ENCODE measurements at regions of chr9 and their contacts with region 1.

Region 1: GRCh38 chr9:129495534-129496325 is 125.2 kb downstream of the C9orf50 start:
- DNase-seq: peak; percentile 97
- ATAC-seq: peak; percentile 89

Region 2: GRCh38 chr9:129139993-129140396 is 355.7 kb before region 1 on chr9:
- intact Hi-C with region 1: loop called (anchors 2 kb)
- DNase-seq: peak; percentile 93
- ATAC-seq: peak; percentile 84

Region 3: DNA sequence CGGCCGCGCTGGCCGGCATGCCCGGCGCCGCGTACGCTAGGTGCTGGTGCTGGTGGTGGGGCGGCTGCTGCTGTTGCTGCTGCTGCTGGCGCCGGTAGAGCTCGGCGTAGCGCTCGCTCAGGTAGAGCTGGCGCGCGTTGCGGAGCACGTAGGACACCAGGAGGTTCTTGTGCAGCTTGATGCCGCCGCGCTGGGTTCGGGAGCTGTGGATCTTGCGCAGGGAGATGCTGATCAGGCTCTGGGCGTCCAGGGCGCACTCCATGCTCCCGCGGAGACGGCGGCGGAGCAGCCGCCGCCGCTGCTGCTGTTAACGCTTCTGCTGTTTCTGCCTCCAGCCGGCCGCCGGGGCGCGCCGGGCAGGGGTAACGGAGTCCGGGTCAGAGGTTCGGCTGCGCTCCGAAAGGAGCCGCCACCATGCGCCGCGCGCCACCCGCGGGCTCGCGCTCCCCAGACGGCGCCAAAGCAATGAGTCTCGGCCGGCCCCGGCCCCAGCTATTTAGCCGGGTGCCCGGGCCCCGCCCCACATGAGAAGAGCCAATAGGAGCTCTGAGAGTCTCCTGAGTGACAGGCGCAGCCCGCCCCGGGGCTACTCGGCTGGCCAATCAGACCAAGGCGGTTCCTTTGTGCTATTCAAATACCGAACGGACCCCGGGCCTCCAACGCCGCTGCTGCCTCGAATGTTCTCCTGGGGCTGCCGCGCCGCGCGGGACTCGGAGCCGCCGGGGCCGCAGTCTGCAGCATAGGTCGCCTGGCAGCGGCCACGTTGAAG is 317.8 kb before region 1 on chr9 and contains the start of gene IER5L:
- intact Hi-C with region 1: loop called (anchors 1 kb)
- DNase-seq: peak; percentile 98
- ATAC-seq: peak; percentile 84
- total RNA-seq, gene IER5L: 4.6 TPM

Region 4: DNA sequence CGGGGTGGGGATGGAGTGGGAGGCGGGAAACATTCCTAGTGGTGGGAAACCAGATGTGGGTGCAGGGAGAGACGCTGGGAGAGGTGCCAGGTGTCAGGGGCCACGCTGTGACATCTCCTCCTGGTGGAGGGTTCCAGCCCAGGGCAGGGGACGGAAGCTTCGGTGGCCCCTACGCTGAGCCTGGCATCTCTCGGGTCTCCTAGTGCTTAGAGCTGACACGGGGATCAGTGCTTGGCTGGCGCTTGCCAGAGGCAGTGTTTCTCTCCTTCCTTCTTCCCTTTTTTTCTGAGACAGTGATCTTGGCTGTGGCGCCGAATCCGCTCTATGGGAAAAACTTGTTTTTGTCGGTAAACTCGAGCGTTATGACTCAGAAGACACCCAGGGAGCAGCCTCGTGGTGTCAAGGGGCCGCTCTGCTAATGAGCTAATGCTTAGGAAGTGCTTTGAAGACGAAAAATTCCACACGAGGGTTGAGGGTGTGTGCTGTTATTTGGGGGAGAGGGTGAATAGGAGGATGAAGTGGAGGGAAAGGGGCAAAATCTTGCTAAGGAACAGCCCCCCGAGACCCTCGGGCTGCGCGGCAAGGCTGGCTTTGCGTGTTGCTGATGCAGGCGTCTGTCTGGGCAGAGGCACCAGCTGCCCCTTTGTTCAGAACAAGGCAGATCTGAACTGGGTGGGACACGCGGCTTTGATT is 297.3 kb before region 1 on chr9:
- intact Hi-C with region 1: no loop called
- DNase-seq: peak; percentile 72
- ATAC-seq: peak; percentile 55

Region 5: DNA sequence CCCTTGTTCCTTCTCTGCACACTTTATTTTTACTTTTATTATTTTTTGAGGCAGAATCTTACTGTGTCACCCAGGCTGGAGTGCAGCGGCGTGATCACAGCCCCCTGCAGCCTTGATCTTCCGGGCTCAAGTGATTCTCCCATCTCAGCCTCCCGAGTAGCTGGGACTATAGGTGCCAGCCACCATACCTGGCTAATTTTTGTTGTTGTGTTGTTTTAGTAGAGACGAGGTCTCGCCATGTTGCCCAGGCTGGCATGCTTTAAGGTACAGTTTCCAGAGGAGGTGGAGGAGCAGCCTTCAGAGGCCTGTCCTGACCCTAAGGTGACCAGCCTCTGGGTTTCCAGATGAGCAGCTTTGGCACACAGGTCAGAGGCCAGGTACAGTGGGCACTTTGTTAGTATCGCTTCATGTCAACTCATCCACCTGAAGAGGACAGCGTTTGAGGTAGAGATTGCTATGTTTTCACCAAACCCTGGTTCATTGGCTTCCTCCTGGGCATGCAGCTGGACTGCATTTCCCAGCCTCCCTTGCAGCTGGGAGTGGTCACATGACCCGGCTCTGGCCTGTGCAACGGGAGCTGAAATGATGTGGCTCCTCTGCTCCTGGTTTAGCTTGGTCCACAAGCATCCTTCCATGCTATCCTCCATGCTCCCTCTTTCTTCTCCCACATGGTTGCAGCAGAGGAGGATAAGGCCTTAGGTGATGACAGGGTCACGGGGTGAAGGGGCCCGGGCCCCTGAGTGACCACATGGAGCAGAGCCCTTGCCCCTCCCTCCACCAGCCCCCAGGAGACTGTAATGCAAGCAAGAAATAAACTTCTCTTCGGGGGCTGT is 178.3 kb before region 1 on chr9:
- intact Hi-C with region 1: no loop called
- DNase-seq: no peak
- ATAC-seq: no peak

Region 6: DNA sequence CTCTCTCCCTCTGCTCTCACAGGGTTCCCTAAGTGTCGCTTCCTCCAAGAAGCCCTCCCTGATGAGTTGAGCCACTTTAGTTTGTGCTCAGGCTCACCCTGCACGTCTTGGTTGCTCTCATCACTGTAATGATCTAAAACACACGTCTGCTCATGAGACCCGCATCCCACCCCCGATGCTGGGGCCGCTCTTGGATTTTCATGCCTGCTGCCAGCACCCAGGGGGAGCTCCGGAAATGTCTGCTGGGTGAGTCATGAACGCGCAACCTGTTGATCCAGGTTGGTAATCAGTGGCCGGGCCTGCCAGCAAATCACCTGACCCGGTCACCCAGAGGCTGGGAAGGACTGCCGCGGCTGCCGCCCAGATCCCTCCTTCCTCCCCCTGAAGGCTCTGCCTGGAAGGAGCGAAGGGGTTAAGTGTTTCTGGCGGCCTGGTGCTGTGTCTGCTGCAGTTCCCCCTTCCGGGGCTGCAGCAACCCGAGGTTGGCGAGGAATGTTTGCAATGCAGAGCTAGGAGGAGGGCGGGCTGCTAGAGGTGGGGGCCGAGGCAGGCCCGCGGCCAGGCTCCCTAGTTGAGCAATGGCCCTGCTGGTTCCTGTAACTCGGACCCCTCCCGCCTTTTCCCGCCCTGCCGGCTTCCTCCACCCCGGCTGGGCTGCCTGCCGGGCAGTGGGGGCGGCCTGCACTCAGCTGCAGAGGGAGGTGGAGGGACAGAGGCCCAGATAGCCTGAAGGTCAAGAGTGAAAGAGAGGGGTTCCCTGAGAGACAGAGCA is 161.6 kb before region 1 on chr9:
- intact Hi-C with region 1: loop called (anchors 2 kb)
- DNase-seq: peak; percentile 97
- ATAC-seq: peak; percentile 92

Region 7: DNA sequence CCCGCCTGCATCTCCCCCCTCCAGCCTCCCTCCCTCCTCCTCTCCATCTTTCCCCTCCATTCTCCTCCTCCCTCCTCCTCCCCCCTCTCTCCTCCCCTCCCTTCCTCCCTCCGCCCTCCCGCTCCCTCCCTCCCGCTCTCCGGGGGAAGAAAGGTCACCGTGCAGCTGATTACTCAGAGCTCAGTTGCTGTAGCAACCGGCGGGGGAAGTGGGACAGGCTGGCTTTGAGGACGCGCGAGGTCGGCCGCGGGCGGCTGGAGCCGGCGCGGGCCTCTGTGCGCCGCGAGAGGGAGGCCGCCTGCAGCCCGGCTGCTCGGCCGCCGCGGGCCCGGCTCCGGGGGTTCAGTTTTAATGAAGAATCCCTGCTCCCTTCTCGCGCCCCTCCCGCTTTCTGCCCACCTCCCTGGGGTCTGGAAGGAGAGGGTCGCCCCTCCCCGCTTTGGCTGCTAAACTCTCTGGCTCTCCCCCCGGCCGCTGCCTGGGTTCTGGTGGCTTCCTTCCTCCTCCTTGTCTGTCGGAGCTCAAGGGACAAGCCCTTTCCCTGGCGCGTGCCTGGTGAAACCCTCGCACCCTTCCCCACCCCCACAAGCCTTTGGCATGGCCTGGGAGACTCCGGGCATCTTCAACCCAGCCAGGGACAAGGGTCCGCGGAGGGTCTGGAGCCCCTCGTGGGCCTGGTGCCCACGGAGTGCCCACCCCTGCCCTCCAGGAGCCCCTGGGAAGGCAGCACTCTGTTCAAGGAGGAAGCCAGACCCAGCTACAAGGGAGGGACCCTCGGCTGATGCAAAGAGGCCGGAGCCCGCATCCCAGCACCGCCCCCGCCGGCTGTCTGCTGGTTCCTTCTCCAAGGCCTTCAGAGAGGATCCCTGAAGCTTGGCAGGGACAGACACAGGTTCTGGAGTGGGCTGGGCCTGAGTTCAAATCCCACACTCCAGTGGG is 35.1 kb before region 1 on chr9:
- intact Hi-C with region 1: loop called (anchors 2 kb)
- DNase-seq: peak; percentile 99
- ATAC-seq: peak; percentile 93

Region 8: DNA sequence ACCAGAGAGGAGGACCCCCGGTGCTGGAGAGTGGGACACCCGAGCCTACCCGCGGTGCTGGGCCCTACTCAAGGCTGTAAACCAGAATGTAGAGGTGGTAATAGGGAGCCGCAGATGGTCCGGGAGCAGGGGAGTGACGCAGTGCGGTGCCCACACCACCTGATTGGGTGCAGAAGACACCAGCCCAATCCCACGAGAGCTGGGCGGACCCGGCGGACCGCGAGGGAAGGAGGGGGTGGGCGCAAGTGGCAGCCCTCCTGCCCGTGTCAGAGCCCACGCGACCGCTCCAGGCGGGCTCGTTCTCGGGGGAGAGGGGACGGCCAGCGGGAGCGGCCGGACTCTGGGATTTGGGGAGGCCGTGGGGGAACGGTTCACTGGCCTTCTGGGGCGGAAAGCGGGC is 54.0 kb after region 1 on chr9:
- intact Hi-C with region 1: loop called (anchors 5 kb)
- DNase-seq: peak; percentile 70
- ATAC-seq: peak; percentile 41

Measured in Right ventricle myocardium inferior (tissue), 1 donor.